ENCODE measurements at regions of chr2 and their contacts with region 1.

Region 1: GRCh38 chr2:172931918-172932520 is 143.6 kb upstream of the MAP3K20 start:
- DNase-seq: peak; percentile 75
- H3K4me3 ChIP-seq: peak overlapping the region in 1 of 2 donors; percentile 10
- H3K27ac ChIP-seq: peak overlapping the region; percentile 62 to 73
- H3K4me1 ChIP-seq: no peaks in the 10 kb centered on the region
- H3K27me3 ChIP-seq: no peaks in the 10 kb centered on the region
- CTCF ChIP-seq: peak; percentile 66 to 88 (median 76)
- POLR2A ChIP-seq: no peak

Region 2: GRCh38 chr2:172864182-172864581 is 67.8 kb before region 1 on chr2:
- intact Hi-C with region 1: loop called (anchors 2 kb)
- DNase-seq: peak; percentile 57
- H3K4me3 ChIP-seq: no peak overlapping the region
- H3K27ac ChIP-seq: no peak overlapping the region
- H3K4me1 ChIP-seq: peaks cover 4% of the 10 kb centered on the region
- H3K27me3 ChIP-seq: no peaks in the 10 kb centered on the region
- CTCF ChIP-seq: peak; percentile 33 to 86 (median 64)
- POLR2A ChIP-seq: no peak

Region 3: DNA sequence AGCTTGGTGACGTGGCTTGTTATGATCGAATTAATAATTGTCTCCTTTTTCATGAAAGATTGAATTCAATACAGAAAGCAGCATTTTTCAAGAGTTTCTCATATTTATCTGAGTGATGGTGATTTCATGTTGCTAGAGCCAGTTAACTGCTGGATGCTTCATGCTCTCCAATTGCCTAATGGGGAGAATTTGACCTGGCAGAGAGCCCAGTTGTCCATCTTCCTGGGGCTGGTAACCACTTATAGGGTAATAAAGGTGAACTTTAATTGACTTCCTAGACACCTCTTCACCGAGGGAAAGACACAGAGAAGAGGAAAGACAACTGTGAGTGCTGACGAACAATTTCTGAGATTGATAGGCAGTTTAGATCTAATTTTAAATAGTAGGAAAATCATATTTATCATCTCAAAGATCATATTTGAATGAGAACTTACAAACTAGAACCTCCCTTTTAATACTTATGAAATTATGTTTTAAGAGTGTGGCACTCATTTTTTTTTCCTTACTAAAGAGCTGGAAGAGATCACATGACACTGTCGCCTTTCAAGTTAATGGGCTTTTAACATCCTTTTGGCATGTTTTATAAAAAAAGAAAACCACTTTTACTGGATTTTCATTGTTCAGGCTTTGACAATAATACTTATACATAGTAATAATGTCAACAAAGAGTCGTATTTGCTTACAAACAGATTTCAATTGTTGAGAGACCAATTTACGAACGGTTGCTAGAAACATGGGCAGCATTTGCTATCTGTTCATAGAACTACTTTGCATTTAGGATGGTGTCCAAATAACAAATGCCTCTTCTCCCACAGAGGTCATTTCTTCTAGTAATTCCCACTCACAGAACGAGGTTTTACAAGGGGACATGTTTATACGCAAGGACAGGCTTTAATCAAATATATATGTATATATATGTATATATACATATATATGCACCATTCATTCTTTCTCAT is 43.0 kb before region 1 on chr2:
- intact Hi-C with region 1: no loop called
- DNase-seq: no peak
- H3K4me3 ChIP-seq: no peak overlapping the region
- H3K27ac ChIP-seq: no peak overlapping the region
- H3K4me1 ChIP-seq: no peaks in the 10 kb centered on the region
- H3K27me3 ChIP-seq: no peaks in the 10 kb centered on the region
- CTCF ChIP-seq: no peak
- POLR2A ChIP-seq: no peak

Region 4: DNA sequence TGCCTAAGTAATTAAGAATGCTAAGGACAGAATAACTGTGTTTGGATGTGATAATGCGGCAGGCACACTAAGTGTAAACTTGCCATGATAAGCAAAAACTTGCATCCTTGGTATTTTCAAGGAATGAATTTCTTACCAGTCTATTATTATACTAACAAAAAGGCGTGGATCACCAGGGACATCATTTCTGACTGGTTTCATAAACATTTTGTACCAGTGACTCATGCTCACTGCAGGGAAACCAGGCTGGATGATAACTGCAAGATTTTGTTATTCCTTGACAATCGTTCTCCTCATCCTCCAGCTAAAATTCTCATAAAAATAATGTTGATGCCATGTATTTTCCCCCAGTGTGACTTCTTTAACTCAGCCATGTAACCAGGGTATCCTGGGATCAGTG is 712.1 kb after region 1 on chr2:
- intact Hi-C with region 1: no loop called
- DNase-seq: no peak
- H3K4me3 ChIP-seq: no peak overlapping the region
- H3K27ac ChIP-seq: no peak overlapping the region
- H3K4me1 ChIP-seq: no peaks in the 10 kb centered on the region
- H3K27me3 ChIP-seq: no peaks in the 10 kb centered on the region
- CTCF ChIP-seq: no peak
- POLR2A ChIP-seq: no peak